Panc1 (cell line): ENCODE measurements at regions of chr13 and their contacts with region 1.

Region 1: GRCh38 chr13:36275190-36276002 is 22.2 kb downstream of the CCDC169 start:
- DNase-seq: no peak
- ATAC-seq: 0 out of 2 replicates have a peak, but pooled peaks have one; percentile 51
- H3K4me3 ChIP-seq: no peak overlapping the region
- H3K27ac ChIP-seq: no peak overlapping the region
- H3K4me1 ChIP-seq: no peaks in the 10 kb centered on the region
- H3K27me3 ChIP-seq: no peaks in the 10 kb centered on the region
- CTCF ChIP-seq: peak; percentile 48; the same call in 1 of the 2 replicates

Region 2: GRCh38 chr13:35978603-35979316 is 296.6 kb before region 1 on chr13:
- CTCF ChIA-PET with region 1: interaction called, 8 read pairs
- POLR2A ChIA-PET with region 1: no interaction called
- in situ Hi-C with region 1: no loop called
- intact Hi-C with region 1: loop called (anchors 1 kb)
- DNase-seq: peak; percentile 18
- ATAC-seq: no peak
- H3K4me3 ChIP-seq: no peak overlapping the region
- H3K27ac ChIP-seq: no peak overlapping the region
- H3K4me1 ChIP-seq: no peaks in the 10 kb centered on the region
- H3K27me3 ChIP-seq: no peaks in the 10 kb centered on the region
- CTCF ChIP-seq: peak; percentile 58; the same call in 1 of the 2 replicates

Region 3: DNA sequence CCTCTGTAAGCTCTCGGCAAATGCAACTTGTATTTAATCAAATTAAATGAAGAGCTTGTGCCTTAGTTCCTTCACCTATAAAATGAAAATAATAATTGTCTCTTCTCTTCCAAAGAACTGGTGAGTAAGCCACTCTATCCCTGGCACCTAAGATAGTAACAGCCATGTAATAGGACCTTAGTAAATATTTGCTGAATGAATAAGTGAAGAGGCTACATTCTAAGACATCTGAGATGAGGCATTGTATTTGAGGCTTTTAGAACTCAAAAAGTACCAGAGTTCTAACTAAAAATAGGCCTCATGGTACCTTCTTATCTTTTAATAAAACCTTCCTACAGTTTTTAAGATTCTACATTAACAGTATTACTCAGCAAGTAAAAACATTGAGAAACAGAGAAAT is 127.0 kb before region 1 on chr13:
- CTCF ChIA-PET with region 1: no interaction called
- POLR2A ChIA-PET with region 1: no interaction called
- in situ Hi-C with region 1: no loop called
- intact Hi-C with region 1: no loop called
- DNase-seq: no peak
- ATAC-seq: no peak
- H3K4me3 ChIP-seq: no peak overlapping the region
- H3K27ac ChIP-seq: no peak overlapping the region
- H3K4me1 ChIP-seq: no peaks in the 10 kb centered on the region
- H3K27me3 ChIP-seq: no peaks in the 10 kb centered on the region
- CTCF ChIP-seq: no peak

Region 4: DNA sequence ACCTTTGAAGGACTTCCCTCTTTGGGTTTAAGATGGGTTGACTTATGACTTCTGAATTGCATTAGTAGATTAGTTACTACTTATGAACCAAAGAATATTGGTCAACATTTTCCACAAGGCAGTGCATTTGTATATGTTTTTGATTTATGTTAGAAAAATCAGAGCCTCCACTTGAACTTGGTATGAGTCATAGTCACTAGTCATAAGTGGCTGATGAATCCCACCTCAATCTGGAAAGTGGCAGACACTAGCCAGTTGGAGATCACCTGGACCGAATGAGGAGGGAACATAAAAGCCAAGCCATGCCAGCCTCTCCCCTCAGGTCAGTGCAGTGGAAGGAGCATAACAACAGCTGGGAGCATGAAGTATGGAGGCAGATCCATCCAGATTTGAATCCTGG is 110.1 kb after region 1 on chr13:
- CTCF ChIA-PET with region 1: no interaction called
- POLR2A ChIA-PET with region 1: no interaction called
- in situ Hi-C with region 1: no loop called
- intact Hi-C with region 1: no loop called
- DNase-seq: no peak
- ATAC-seq: no peak
- H3K4me3 ChIP-seq: no peak overlapping the region
- H3K27ac ChIP-seq: no peak overlapping the region
- H3K4me1 ChIP-seq: no peaks in the 10 kb centered on the region
- H3K27me3 ChIP-seq: no peaks in the 10 kb centered on the region
- CTCF ChIP-seq: no peak